PC-9 (cell line): ENCODE measurements at regions of chr20 and their contacts with region 1.

Region 1: DNA sequence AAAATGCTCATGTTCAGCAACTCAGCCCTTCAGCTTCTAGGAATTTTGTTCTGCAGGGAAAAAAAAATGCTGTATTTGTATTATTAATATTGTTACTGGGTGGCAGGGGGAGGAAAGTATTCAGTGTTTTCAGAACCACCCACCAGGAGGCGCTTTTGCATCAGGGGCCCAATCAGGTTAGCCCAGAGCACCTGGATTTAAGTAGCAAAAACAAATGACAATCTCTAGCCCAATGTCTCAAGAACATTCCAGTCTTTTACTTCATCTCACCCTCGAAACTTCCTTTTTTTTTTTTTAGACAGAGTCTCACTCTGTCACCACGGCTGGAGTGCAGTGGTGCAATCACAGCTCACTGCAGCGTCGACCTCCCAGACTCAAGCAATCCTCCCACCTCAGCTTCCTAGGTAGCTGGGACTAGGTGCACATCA is 635 bp upstream of the C20orf203 start:
- DNase-seq: peak; percentile 58 to 73
- H3K4me3 ChIP-seq: no peak overlapping the region
- H3K27ac ChIP-seq: no peak overlapping the region
- H3K4me1 ChIP-seq: peaks cover 10% of the 10 kb centered on the region
- H3K27me3 ChIP-seq: no peaks in the 10 kb centered on the region
- CTCF ChIP-seq: peak; percentile 90

Region 2: GRCh38 chr20:32685541-32686529 is 11.5 kb after region 1 on chr20:
- CTCF ChIA-PET with region 1: no interaction called
- POLR2A ChIA-PET with region 1: no interaction called
- intact Hi-C with region 1: no loop called
- DNase-seq: no peak
- H3K4me3 ChIP-seq: no peak overlapping the region
- H3K27ac ChIP-seq: no peak overlapping the region
- H3K4me1 ChIP-seq: peaks cover 9% of the 10 kb centered on the region
- H3K27me3 ChIP-seq: no peaks in the 10 kb centered on the region
- CTCF ChIP-seq: no peak

Region 3: GRCh38 chr20:32751702-32752457 is 77.5 kb after region 1 on chr20:
- CTCF ChIA-PET with region 1: no interaction called
- POLR2A ChIA-PET with region 1: no interaction called
- intact Hi-C with region 1: no loop called
- DNase-seq: no peak
- H3K4me3 ChIP-seq: no peak overlapping the region
- H3K27ac ChIP-seq: no peak overlapping the region
- H3K4me1 ChIP-seq: peaks cover 8% of the 10 kb centered on the region
- H3K27me3 ChIP-seq: no peaks in the 10 kb centered on the region
- CTCF ChIP-seq: no peak

Region 4: GRCh38 chr20:32762149-32762753 is 87.9 kb after region 1 on chr20 and contains the start of gene DNMT3B:
- CTCF ChIA-PET with region 1: interaction called, 4 read pairs
- POLR2A ChIA-PET with region 1: interaction called, 6 read pairs
- intact Hi-C with region 1: loop called (anchors 5 kb)
- DNase-seq: peak; percentile 51 to 90
- H3K4me3 ChIP-seq: peak within 1 kb of the TSS; percentile 93
- H3K27ac ChIP-seq: no peak within 1 kb of the TSS
- H3K4me1 ChIP-seq: peaks cover 7% of the 10 kb centered on the region; the same call in 1 of the 2 replicates
- H3K27me3 ChIP-seq: no peaks in the 10 kb centered on the region
- CTCF ChIP-seq: no peak
- total RNA-seq, gene DNMT3B: 5.7 and 8.0 TPM in 2 replicates

Region 5: DNA sequence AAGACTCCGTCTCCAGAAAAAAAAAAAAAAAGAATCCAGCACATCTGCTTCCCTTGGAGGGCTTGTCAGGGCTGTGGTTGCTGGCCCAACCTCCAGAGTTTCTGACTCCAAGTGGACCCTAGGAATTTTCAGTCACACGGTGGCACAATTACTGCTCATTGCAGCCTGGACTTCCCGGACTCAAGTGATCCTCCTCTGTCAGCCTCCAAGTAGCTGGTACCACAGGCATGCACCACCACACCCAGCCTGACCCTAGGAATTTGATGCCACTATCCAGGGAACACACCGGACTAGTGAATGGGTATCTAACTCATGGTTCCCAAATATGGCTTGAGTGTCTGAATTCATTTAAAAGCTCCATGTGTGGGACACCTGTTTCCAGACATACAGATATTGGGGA is 135.5 kb after region 1 on chr20:
- CTCF ChIA-PET with region 1: interaction called, 13 read pairs
- POLR2A ChIA-PET with region 1: no interaction called
- intact Hi-C with region 1: no loop called
- DNase-seq: no peak
- H3K4me3 ChIP-seq: no peak overlapping the region
- H3K27ac ChIP-seq: no peak overlapping the region
- H3K4me1 ChIP-seq: no peaks in the 10 kb centered on the region
- H3K27me3 ChIP-seq: no peaks in the 10 kb centered on the region
- CTCF ChIP-seq: no peak